PC-9 (cell line): ENCODE measurements at regions of chr12 and their contacts with region 1.

Region 1: DNA sequence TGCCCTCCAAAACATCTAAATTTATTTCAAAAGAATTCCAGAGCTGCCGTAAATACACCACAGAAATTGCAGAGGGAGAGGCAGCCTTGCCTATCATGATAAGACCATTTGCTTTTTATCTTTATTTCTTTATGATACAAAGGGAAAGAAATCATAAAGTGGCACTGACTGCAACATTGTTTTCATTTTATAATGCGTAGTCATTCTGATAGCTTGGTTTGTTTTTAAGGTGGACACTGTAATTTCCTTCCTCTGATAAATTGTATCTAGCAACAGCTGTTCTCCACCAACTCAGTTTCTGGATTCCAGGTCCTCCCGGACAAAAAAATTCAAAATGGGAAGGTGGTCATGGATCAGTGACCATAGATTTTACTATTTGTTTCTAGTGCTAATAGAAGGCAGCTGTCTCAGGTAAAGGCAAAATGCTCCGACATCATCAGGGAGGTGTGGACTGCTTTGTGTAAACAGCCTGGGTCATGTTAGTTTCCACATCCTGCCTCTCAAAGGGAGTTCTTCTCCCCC is 623 bp upstream of the TSPAN8 start:
- DNase-seq: no peak
- H3K4me3 ChIP-seq: no peak overlapping the region
- H3K27ac ChIP-seq: no peak overlapping the region
- H3K4me1 ChIP-seq: no peaks in the 10 kb centered on the region
- H3K27me3 ChIP-seq: no peaks in the 10 kb centered on the region
- CTCF ChIP-seq: no peak

Region 2: GRCh38 chr12:71183018-71183417 is 24.6 kb after region 1 on chr12:
- CTCF ChIA-PET with region 1: no interaction called
- POLR2A ChIA-PET with region 1: no interaction called
- intact Hi-C with region 1: no loop called
- DNase-seq: peak in 1 of 2 experiments; percentile 9
- H3K4me3 ChIP-seq: no peak overlapping the region
- H3K27ac ChIP-seq: no peak overlapping the region
- H3K4me1 ChIP-seq: no peaks in the 10 kb centered on the region
- H3K27me3 ChIP-seq: no peaks in the 10 kb centered on the region
- CTCF ChIP-seq: no peak

Region 3: GRCh38 chr12:71242511-71242910 is 84.1 kb after region 1 on chr12:
- CTCF ChIA-PET with region 1: no interaction called
- POLR2A ChIA-PET with region 1: interaction called, 10 read pairs
- intact Hi-C with region 1: no loop called
- DNase-seq: no peak
- H3K4me3 ChIP-seq: no peak overlapping the region
- H3K27ac ChIP-seq: no peak overlapping the region
- H3K4me1 ChIP-seq: no peaks in the 10 kb centered on the region
- H3K27me3 ChIP-seq: no peaks in the 10 kb centered on the region
- CTCF ChIP-seq: no peak